ENCODE measurements at regions of chr4 and their contacts with region 1.

Region 1: DNA sequence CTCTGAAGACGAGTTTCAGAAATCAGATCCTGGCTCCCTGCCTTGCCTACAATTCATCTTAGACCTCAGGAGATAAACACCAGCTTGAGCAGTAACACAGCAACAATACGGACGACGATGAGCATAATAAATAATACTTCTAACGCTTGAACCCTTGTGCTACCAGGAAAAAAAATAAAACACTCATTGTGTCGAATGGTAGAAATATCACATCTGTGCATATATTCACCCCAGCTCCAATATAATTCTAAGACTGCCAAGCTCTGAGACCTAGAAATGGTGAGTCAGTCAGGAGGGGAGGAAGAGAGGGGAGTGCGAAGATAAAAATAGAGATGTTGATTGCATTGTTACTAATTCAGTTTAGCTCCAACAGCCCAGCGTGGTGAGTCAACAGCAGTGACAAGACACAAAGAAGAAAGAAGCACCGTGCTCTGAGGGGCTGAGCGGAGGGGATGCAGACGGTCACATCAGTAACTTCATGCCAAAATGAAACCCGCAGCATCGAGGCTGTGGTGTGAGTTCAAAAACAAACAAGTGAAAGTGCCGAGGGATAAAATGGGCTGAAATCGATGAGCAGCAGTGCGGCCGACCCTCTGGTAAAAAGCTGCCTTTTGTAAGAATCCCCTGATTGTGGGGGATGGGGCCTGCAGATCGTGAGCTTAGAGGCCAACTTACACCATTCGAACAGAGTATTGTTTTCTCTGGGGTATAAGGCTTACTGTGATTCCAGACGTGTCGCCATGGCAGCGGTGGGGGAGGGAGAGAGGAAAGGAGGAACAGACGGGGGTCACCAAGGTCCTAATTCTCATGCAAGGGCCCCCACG is 150.4 kb downstream of the MGST2 start:
- DNase-seq: peak; percentile 65 to 71
- ATAC-seq: peak; percentile 91 to 94
- H3K4me3 ChIP-seq: peak overlapping the region; percentile 47 to 69 (median 56)
- H3K27ac ChIP-seq: peak overlapping the region; percentile 73 to 83 (median 80)
- H3K4me1 ChIP-seq: peaks cover 22 to 44% of the 10 kb centered on the region in 2 donors
- H3K27me3 ChIP-seq: no peaks in the 10 kb centered on the region
- CTCF ChIP-seq: no peak
- POLR2A ChIP-seq: peak; percentile 49 to 55

Region 2: GRCh38 chr4:139144161-139144859 is 671.7 kb before region 1 on chr4:
- in situ Hi-C with region 1: no loop called
- intact Hi-C with region 1: no loop called
- DNase-seq: peak; percentile 9 to 31
- ATAC-seq: peak; percentile 48 to 50
- H3K4me3 ChIP-seq: no peak overlapping the region
- H3K27ac ChIP-seq: peak overlapping the region; percentile 62 to 74 (median 68)
- H3K4me1 ChIP-seq: peaks cover 66 to 67% of the 10 kb centered on the region in 2 donors
- H3K27me3 ChIP-seq: no peaks in the 10 kb centered on the region
- CTCF ChIP-seq: no peak
- POLR2A ChIP-seq: no peak

Region 3: DNA sequence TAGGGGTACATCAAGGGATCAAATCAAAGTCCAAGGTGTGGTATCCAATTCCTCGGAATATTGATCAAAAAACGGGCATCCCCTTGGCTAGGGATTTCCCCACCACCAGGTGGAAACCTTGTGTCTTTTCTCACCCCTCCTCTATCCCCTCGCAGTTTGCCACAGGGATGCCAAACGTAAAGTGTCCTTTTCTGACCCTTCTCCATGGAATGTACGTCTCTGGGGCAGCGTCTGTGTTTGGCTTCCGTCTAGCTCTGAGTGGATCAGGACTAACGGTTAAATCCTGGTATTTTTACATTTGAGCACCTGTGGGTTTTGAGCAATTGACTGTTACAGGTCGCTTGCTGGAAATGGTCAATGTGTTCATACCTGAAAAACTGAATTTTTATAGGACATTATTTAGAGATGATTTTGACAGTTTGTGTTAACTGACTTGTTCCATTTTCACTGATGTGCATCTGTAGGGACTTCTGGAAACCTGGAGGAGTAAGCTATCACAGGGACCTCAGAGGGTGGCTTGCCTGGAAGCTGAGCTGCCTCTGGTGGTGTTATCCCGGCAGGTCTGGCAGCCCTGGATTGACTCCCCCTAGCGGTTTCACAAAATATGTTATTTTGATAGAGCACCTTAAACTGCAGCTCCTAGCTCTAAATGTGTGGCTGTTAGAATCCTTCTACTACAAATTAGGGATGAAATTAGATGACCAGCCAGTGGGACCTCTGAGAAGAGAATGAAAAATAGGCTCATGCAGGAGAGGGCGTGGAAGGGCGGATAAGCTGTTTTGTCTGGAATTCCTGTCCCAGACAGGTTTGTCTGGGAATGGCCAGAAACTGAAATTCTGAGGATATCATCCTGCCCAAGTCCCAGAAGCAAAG is 159.1 kb before region 1 on chr4:
- in situ Hi-C with region 1: no loop called
- intact Hi-C with region 1: loop called (anchors 5 kb)
- DNase-seq: peak in 1 of 2 donors; percentile 28
- ATAC-seq: peak; percentile 63 to 82
- H3K4me3 ChIP-seq: no peak overlapping the region
- H3K27ac ChIP-seq: peak overlapping the region in 2 of 4 donors; percentile 36 to 58
- H3K4me1 ChIP-seq: peaks cover 9 to 15% of the 10 kb centered on the region in 2 donors
- H3K27me3 ChIP-seq: no peaks in the 10 kb centered on the region
- CTCF ChIP-seq: peak; percentile 63 to 84 (median 66)
- POLR2A ChIP-seq: no peak

Region 4: GRCh38 chr4:139743027-139743426 is 73.0 kb before region 1 on chr4:
- in situ Hi-C with region 1: no loop called
- intact Hi-C with region 1: no loop called
- DNase-seq: no peak
- ATAC-seq: no peak
- H3K4me3 ChIP-seq: no peak overlapping the region
- H3K27ac ChIP-seq: no peak overlapping the region
- H3K4me1 ChIP-seq: peaks cover 26 to 30% of the 10 kb centered on the region in 2 donors
- H3K27me3 ChIP-seq: no peaks in the 10 kb centered on the region
- CTCF ChIP-seq: no peak
- POLR2A ChIP-seq: no peak

Region 5: DNA sequence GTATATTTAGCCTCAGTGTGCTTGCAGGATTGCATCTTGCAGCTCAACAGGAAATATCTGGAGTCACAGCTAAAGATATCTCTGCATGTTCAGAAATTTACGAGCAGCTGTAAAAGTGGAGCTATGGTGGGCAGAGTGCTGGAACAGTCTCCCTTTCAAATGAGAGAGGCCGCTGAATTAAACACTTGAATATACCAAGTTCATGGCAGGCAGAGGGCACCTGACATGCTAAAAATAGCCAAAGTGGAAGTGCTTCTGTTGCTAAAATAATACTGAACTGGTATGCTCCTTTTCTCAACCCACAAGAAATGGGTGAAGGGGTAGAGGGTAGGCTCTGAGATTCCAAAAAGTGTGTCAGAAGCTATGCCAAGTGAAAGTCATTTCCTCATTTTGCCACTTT is 52.3 kb before region 1 on chr4:
- in situ Hi-C with region 1: no loop called
- intact Hi-C with region 1: loop called (anchors 2 kb)
- DNase-seq: peak in 1 of 2 donors; percentile 30
- ATAC-seq: peak; percentile 69
- H3K4me3 ChIP-seq: peak overlapping the region in 3 of 4 donors; percentile 3 to 31 (median 6)
- H3K27ac ChIP-seq: peak overlapping the region; percentile 76 to 85 (median 82)
- H3K4me1 ChIP-seq: peaks cover 56 to 59% of the 10 kb centered on the region in 2 donors
- H3K27me3 ChIP-seq: no peaks in the 10 kb centered on the region
- CTCF ChIP-seq: no peak
- POLR2A ChIP-seq: no peak